Cardiac septum (tissue), 1 donor: ENCODE measurements at regions of chr2 and their contacts with region 1.

Region 1: GRCh38 chr2:144332356-144333142 is 187.4 kb downstream of the ZEB2 start:
- DNase-seq: peak; percentile 96

Region 2: DNA sequence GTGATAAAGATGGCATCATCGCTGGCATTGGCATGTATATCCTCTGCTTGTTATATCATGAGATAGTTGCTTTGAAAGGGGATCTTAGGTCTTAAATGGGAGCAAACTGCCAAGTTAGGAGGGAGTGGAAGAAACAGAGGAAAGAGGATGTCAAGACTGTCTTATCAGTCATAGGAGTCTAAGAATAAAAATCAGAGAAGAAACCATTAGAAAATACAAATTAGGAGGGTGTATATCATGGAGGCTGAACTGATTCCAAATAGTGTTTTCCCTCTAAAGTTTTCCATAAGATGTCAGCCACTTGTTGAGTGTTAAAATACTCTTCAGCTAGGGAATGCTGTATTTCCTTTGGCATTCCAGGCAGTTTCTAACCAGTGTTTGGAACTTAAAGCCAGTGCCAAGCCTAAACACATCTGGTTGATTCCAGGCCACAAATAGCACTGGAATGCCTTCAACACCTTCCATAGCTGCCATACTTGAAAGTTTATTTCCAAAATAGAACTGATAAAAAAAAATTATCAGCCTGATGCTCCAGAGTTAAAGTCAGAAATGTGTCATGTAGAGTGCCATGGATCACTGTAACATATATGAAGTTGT is 58.0 kb after region 1 on chr2:
- intact Hi-C with region 1: loop called (anchors 5 kb)
- DNase-seq: no peak

Region 3: DNA sequence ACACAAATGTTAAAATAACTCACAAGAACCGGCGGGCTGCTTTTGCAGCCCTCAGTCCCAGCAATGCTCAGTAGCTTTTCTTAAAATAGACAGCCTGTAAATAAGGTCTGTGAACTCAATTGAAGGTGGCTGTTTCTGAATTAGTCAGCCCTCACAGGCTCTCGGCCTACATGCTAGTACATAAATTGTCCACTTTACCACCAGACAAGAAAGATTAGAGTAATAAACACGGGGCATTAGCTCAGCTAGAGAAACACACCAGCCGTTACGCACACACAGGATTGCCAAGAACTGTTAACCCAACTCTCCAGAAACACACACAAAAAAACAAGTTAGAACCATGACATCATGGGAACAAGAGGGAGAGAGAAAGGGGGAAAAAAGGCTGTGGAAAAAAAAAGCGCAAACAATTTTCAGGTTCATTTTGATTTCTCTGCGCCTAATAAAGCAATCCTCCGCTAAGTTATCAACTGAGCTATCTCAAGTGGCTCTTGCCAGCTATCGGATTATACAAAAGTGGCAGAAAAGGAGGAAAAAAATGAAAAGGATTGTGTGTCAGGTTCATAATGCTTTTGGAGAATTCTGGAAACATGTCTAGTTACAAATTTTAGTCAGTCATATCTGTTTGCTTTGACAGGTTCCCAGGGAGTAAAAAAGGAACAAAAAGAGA is 98.3 kb after region 1 on chr2:
- intact Hi-C with region 1: no loop called
- DNase-seq: no peak

Region 4: DNA sequence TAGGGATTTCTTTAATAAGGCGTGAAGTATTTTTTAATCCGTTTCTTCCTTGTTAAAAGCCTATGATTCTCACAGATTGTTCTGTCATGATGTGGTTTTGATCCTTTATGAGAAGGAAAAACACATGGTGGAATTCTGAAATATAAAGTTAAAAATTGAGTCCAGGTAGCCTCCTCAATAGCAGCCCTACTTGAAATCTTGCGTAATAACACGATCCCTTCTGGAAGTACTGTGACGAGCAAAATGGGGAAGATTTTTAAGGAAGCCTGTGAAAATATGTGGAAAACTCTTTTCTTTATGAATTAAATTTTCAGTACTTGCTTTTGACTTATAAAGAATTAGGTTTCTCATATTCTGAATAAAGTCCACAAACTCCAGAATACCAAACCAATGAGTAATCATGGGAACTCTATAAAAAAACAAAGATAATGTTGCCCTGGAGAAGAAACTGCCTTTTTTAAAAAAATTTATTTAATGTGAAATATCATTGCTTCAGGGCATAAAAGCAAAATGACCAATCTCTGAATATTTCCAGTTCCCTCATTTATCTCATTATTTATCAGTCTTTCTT is 663.8 kb after region 1 on chr2:
- intact Hi-C with region 1: loop called (anchors 5 kb)
- DNase-seq: no peak